Activated CD8-positive, alpha-beta T cell treated with anti-CD3 and anti-CD28 coated beads for 36 hours (primary cell): ENCODE measurements at regions of chr17 and their contacts with region 1.

Region 1: DNA sequence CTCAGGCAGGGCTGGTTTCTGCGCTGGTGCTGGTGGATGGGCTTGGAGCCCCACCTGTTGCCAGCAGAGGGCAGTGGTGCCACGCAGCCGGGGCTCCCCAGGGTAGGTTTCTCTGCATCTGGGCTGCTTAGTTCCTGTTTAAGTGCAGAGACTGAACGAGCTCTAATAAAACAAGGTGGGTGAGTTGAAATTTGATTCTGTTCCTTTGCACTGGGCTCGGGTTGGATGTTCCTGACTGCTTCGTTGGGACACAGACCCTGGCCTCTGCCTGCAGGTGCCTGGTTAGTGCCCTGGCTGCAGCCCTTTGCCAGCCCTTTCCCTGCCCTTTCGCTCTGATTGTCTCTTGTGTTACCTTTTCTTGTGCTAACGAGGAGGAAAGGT is 30.0 kb downstream of the TBCD start:
- DNase-seq: peak; percentile 86
- ATAC-seq: peak; percentile 100
- H3K4me3 Mint-ChIP-seq: no peak overlapping the region
- H3K27ac Mint-ChIP-seq: no peak overlapping the region
- H3K4me1 Mint-ChIP-seq: peaks cover 7% of the 10 kb centered on the region
- H3K27me3 Mint-ChIP-seq: no peaks in the 10 kb centered on the region
- CTCF ChIP-seq: peak; percentile 96

Region 2: GRCh38 chr17:82917691-82918345 is 135.9 kb after region 1 on chr17:
- CTCF ChIA-PET with region 1: interaction called, 19 read pairs
- POLR2A ChIA-PET with region 1: interaction called, 3 read pairs
- intact Hi-C with region 1: loop called (anchors 10 kb)
- DNase-seq: peak; percentile 63
- ATAC-seq: peak; percentile 56
- H3K4me3 Mint-ChIP-seq: no peak overlapping the region
- H3K27ac Mint-ChIP-seq: no peak overlapping the region
- H3K4me1 Mint-ChIP-seq: peaks cover 10% of the 10 kb centered on the region
- H3K27me3 Mint-ChIP-seq: no peaks in the 10 kb centered on the region
- CTCF ChIP-seq: peak; percentile 68